A549 (cell line): ENCODE measurements at regions of chr6 and their contacts with region 1.

Region 1: GRCh38 chr6:107489636-107490565 is at the start of gene SOBP:
- DNase-seq: peak; percentile 28 to 36
- ATAC-seq: peak; percentile 62 to 77
- H3K4me3 ChIP-seq: peak within 1 kb of the TSS; percentile 85
- H3K27ac ChIP-seq: peak within 1 kb of the TSS; percentile 51 to 92; a peak in 5 of 6 replicates
- H3K4me1 ChIP-seq: no peaks in the 10 kb centered on the region
- CTCF ChIP-seq: no peak
- EP300 ChIP-seq: no peak
- POLR2A ChIP-seq: peak; percentile 13; the same call in 1 of the 2 replicates
- RAD21 ChIP-seq: no peak
- polyA plus RNA-seq, gene SOBP: 0.18 and 0.33 TPM in 2 replicates

Region 2: DNA sequence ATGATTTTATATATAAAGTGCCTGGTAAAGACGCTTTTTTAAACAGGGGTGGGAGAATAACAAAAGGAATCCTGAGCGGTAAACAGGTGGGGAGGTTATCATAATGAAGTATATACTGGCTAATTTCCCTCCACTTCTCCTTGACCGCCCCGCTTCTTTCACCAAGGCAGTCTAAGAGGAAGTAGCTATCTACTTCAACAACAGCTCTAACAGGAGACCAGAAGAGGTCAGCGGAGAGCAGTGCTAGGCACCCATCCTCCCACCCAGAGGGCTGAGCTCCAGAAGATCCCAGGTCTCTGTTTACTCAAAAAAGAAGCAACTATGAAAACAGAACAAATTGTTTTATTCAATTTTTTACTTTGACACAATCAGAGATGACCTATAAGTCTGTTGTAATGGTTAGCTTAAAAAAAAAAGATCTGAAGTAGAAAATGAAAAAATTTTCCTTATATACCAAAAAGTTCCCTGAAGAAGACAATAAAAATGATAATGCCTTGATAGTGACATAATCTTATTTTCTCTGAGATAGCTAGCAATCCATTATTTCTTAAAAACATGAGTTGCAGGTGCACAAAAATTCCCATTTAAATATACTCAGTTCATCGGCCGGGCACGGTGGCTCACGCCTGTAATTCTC is 171.7 kb before region 1 on chr6:
- CTCF ChIA-PET with region 1: interaction called, 10 read pairs
- POLR2A ChIA-PET with region 1: no interaction called
- DNase-seq: peak; percentile 41 to 52
- ATAC-seq: peak; percentile 92
- H3K4me3 ChIP-seq: no peak overlapping the region
- H3K27ac ChIP-seq: no peak overlapping the region
- H3K4me1 ChIP-seq: no peaks in the 10 kb centered on the region
- CTCF ChIP-seq: peak; percentile 57
- EP300 ChIP-seq: no peak
- POLR2A ChIP-seq: no peak
- RAD21 ChIP-seq: peak; percentile 61 to 68; a peak in 4 of 5 replicates

Region 3: GRCh38 chr6:107396211-107396610 is 93.7 kb before region 1 on chr6:
- CTCF ChIA-PET with region 1: no interaction called
- POLR2A ChIA-PET with region 1: no interaction called
- DNase-seq: no peak
- ATAC-seq: no peak
- H3K4me3 ChIP-seq: no peak overlapping the region
- H3K27ac ChIP-seq: no peak overlapping the region
- H3K4me1 ChIP-seq: no peaks in the 10 kb centered on the region
- CTCF ChIP-seq: no peak
- EP300 ChIP-seq: no peak
- POLR2A ChIP-seq: no peak
- RAD21 ChIP-seq: no peak

Region 4: GRCh38 chr6:107435798-107436197 is 54.1 kb before region 1 on chr6:
- CTCF ChIA-PET with region 1: no interaction called
- POLR2A ChIA-PET with region 1: no interaction called
- DNase-seq: no peak
- ATAC-seq: no peak
- H3K4me3 ChIP-seq: no peak overlapping the region
- H3K27ac ChIP-seq: no peak overlapping the region
- H3K4me1 ChIP-seq: no peaks in the 10 kb centered on the region
- CTCF ChIP-seq: no peak
- EP300 ChIP-seq: no peak
- POLR2A ChIP-seq: no peak
- RAD21 ChIP-seq: no peak

Region 5: DNA sequence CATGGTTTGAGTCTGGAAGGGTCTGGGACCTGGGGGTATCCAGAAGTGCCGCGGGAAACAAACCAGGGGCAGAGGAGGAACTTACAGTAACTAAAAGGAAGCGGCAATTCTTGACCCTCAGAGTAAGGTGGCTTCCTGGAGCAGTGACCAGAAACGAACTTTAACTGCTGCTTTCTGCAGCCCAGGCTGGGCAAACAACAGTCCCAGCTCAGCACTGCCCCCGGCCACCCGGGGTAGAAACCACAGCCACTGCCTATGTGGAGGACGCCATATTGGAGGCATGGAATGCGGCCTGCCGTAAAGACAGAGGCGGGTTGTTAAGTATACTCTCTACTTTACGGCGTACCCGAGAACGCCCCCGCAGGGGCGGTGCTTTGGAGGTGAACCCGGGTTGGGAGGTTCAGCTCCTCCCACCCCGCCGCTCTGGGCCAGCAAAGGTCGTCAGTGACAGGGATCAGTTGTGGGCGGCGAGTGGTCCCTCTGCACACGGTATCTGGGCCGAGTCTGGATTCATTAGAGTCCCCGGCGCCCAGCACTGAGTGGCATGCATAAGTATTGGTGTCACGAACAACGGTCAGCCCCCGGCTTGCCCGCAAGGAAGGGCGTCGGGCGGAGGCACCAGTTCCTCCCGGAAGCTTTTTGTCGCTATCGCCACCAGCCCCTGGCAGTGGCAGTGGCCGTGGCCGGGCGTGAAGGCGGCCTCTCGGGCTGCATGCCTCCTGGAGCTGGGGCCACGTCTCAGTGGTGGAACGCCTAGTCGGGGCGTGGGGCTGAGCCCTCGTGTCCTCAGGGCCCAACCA is 30.4 kb before region 1 on chr6 and contains the start of gene PDSS2:
- CTCF ChIA-PET with region 1: interaction called, 5 read pairs
- POLR2A ChIA-PET with region 1: interaction called, 10 read pairs
- DNase-seq: peak; percentile 86 to 95
- ATAC-seq: peak; percentile 97 to 98
- H3K4me3 ChIP-seq: peak within 1 kb of the TSS; percentile 85
- H3K27ac ChIP-seq: peak within 1 kb of the TSS; percentile 88 to 93
- H3K4me1 ChIP-seq: peaks cover 6% of the 10 kb centered on the region; the same call in 1 of the 3 replicates
- CTCF ChIP-seq: peak; percentile 23; the same call in 1 of the 3 replicates
- EP300 ChIP-seq: no peak
- POLR2A ChIP-seq: peak; percentile 70
- RAD21 ChIP-seq: peak in 1 of 2 experiments; percentile 14; a peak in 1 of 5 replicates
- polyA plus RNA-seq, gene PDSS2: 17.2 and 17.3 TPM in 2 replicates